ENCODE measurements at regions of chr22 and their contacts with region 1.

Region 1: GRCh38 chr22:36194971-36195370 is 6.6 kb downstream of the APOL4 start:
- DNase-seq: peak; percentile 77
- ATAC-seq: peak; percentile 75
- H3K4me3 ChIP-seq: no peak overlapping the region
- H3K27ac ChIP-seq: no peak overlapping the region
- H3K4me1 ChIP-seq: peaks cover 11% of the 10 kb centered on the region
- H3K27me3 ChIP-seq: no peaks in the 10 kb centered on the region
- CTCF ChIP-seq: peak; percentile 82
- POLR2A ChIP-seq: no peak
- RAD21 ChIP-seq: peak; percentile 81

Region 2: GRCh38 chr22:36239401-36240171 is 44.6 kb after region 1 on chr22 and contains the start of gene APOL2:
- CTCF ChIA-PET with region 1: interaction called, 8 read pairs
- POLR2A ChIA-PET with region 1: no interaction called
- dilution Hi-C with region 1: no loop called
- in situ Hi-C with region 1: no loop called
- intact Hi-C with region 1: loop called (anchors 2 kb)
- DNase-seq: peak; percentile 93
- ATAC-seq: peak; percentile 96
- H3K4me3 ChIP-seq: peak within 1 kb of the TSS; percentile 65
- H3K27ac ChIP-seq: peak within 1 kb of the TSS; percentile 73
- H3K4me1 ChIP-seq: peaks cover 19% of the 10 kb centered on the region
- H3K27me3 ChIP-seq: no peaks in the 10 kb centered on the region
- CTCF ChIP-seq: peak; percentile 73
- POLR2A ChIP-seq: peak; percentile 84
- RAD21 ChIP-seq: peak; percentile 59
- total RNA-seq, gene APOL2: 40.3 and 57.5 TPM in 2 replicates

Region 3: GRCh38 chr22:36277482-36278291 is 82.7 kb after region 1 on chr22:
- CTCF ChIA-PET with region 1: no interaction called
- POLR2A ChIA-PET with region 1: no interaction called
- dilution Hi-C with region 1: no loop called
- in situ Hi-C with region 1: no loop called
- intact Hi-C with region 1: loop called (anchors 2 kb)
- DNase-seq: peak; percentile 56
- ATAC-seq: peak; percentile 74
- H3K4me3 ChIP-seq: no peak overlapping the region
- H3K27ac ChIP-seq: no peak overlapping the region
- H3K4me1 ChIP-seq: no peaks in the 10 kb centered on the region
- H3K27me3 ChIP-seq: no peaks in the 10 kb centered on the region
- CTCF ChIP-seq: peak; percentile 63
- POLR2A ChIP-seq: peak; percentile 38; the same call in 1 of the 2 replicates
- RAD21 ChIP-seq: peak; percentile 37

Region 4: DNA sequence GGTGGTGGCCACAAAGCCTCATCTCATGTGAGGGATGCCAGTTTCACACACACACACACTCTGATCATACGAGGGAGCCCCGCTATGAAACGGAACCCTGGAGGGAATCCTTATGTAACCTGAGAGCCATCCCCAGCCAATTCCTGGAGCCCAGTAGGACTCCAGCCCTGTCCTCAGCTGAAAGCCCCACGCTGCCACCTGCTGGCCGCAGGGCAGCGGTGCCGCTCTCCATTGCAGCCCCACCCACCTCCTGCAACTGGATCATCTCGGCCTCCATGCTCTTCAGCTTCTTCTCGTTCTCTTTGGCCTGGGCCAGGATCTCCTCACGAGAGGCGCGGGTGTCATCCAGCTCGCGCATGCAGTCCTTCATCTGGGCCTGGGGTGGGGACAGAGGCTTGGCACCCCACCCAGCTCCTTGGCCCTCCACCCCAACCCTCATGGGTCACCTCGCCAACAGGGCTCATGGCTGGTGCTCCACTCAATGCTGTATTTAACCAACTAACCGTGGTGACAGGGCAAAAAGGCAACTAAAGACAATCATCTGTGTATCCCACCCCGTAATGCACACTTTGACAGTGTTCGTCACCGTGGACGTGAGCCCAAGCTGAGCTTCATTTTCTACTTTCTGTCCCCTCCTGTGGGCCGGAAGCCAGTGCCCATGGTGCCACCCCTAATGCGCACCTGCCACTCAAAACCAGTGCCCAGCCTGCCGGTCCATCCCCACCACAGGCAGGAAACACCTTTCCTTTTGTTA is 91.7 kb after region 1 on chr22:
- CTCF ChIA-PET with region 1: no interaction called
- POLR2A ChIA-PET with region 1: no interaction called
- dilution Hi-C with region 1: no loop called
- in situ Hi-C with region 1: no loop called
- intact Hi-C with region 1: loop called (anchors 1 kb)
- DNase-seq: peak; percentile 72
- ATAC-seq: peak; percentile 93
- H3K4me3 ChIP-seq: no peak overlapping the region
- H3K27ac ChIP-seq: peak overlapping the region; percentile 13; the same call in 1 of the 2 replicates
- H3K4me1 ChIP-seq: no peaks in the 10 kb centered on the region
- H3K27me3 ChIP-seq: no peaks in the 10 kb centered on the region
- CTCF ChIP-seq: peak; percentile 81
- POLR2A ChIP-seq: no peak
- RAD21 ChIP-seq: peak; percentile 53; the same call in 1 of the 2 replicates

Region 5: GRCh38 chr22:36481393-36482168 is 286.6 kb after region 1 on chr22 and contains the start of gene TXN2:
- CTCF ChIA-PET with region 1: no interaction called
- POLR2A ChIA-PET with region 1: no interaction called
- dilution Hi-C with region 1: no loop called
- in situ Hi-C with region 1: loop called (anchors 10 kb)
- intact Hi-C with region 1: loop called (anchors 1 kb)
- DNase-seq: peak; percentile 95
- ATAC-seq: peak; percentile 94
- H3K4me3 ChIP-seq: peak within 1 kb of the TSS; percentile 64
- H3K27ac ChIP-seq: peak within 1 kb of the TSS; percentile 90
- H3K4me1 ChIP-seq: peaks cover 3% of the 10 kb centered on the region
- H3K27me3 ChIP-seq: no peaks in the 10 kb centered on the region
- CTCF ChIP-seq: no peak
- POLR2A ChIP-seq: peak; percentile 95
- RAD21 ChIP-seq: 0 out of 2 replicates have a peak, but pooled peaks have one; percentile 9
- total RNA-seq, gene TXN2: 49.6 and 51.7 TPM in 2 replicates

Region 6: GRCh38 chr22:36486619-36487384 is 291.8 kb after region 1 on chr22:
- CTCF ChIA-PET with region 1: no interaction called
- POLR2A ChIA-PET with region 1: no interaction called
- dilution Hi-C with region 1: no loop called
- in situ Hi-C with region 1: loop called (anchors 10 kb)
- intact Hi-C with region 1: loop called (anchors 1 kb)
- DNase-seq: peak; percentile 68
- ATAC-seq: 0 out of 2 replicates have a peak, but pooled peaks have one; percentile 22
- H3K4me3 ChIP-seq: no peak overlapping the region
- H3K27ac ChIP-seq: no peak overlapping the region
- H3K4me1 ChIP-seq: peaks cover 1% of the 10 kb centered on the region
- H3K27me3 ChIP-seq: no peaks in the 10 kb centered on the region
- CTCF ChIP-seq: peak; percentile 83
- POLR2A ChIP-seq: 0 out of 2 replicates have a peak, but pooled peaks have one; percentile 29
- RAD21 ChIP-seq: peak; percentile 92

Region 7: DNA sequence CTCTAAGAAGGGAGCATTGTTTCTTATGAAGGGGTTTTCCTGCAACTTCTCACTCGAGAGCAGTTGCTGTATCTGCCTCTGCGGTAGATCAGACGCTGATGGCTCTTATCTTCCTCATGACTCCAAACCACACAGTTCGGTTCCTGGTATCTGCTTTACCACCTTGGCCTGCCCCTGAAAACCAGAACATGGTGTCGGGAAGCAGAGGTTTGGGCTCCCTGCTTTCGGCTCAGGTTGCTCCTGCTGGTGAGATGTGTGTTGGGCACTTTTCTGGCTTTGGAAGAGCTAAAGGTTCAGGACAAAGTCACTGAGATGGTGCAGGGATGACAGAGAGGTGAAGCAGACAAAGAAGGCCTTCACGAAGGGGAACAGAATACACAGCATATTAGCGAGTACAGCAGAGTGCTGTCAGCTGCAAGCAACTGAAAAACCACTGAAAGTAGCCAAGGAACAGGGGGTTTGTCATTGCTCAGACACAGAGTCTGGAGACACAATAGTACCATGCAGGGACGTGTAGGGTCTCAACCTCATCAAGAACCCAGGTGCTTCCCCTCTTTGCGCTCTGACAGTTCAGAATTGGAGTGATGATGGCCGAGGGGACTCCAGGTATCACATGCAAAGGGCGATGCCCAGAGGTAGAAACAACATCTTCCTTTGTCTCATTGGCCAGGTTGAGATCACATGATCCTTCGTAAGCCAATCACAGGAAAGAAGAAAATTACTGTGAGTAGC is 706.6 kb after region 1 on chr22:
- CTCF ChIA-PET with region 1: no interaction called
- POLR2A ChIA-PET with region 1: no interaction called
- dilution Hi-C with region 1: no loop called
- in situ Hi-C with region 1: no loop called
- intact Hi-C with region 1: no loop called
- DNase-seq: no peak
- ATAC-seq: no peak
- H3K4me3 ChIP-seq: no peak overlapping the region
- H3K27ac ChIP-seq: no peak overlapping the region
- H3K4me1 ChIP-seq: no peaks in the 10 kb centered on the region
- H3K27me3 ChIP-seq: peaks cover 25% of the 10 kb centered on the region
- CTCF ChIP-seq: no peak
- POLR2A ChIP-seq: no peak
- RAD21 ChIP-seq: no peak

Measured in IMR-90 (cell line).